ENCODE measurements at regions of chr1 and their contacts with region 1.

Region 1: DNA sequence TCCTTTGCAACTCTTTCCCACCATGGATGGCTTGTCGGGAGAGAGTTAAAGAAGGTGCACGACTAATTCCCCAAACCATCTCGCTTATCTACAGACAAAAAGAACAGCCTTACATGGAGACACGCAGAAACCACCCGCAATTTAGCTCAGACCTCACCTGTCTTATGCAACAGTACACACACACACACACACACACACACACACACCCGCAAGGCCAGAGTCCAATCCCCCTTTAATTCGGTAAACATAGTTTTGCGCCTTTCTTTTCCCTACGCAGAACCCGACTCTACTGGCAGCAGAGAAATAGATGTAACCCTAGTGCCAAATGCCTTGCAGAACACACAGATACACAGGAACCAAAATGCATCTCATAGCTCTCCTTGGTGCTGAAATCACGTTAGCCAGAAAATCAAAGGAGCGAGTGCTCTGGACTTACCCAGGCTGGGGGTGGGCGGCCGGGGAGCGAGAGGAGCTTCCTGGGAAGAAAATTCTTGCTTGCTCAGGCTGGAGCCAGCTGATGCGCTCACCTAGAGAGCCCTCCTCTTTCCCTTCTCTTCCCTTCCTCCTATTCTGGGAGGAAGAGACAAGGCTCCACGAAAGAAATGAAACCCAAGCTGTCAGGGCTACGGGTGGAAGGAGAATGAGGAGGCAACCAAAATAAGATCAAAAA is 470 bp downstream of the TNR start:
- DNase-seq: peak; percentile 43
- H3K4me3 ChIP-seq: peak overlapping the region in 1 of 2 experiments; percentile 43; a peak in 2 of 4 replicates
- H3K27ac ChIP-seq: peak overlapping the region in 1 of 2 experiments; percentile 51; a peak in 1 of 4 replicates
- H3K4me1 ChIP-seq: peaks cover 0 to 5% of the 10 kb centered on the region in 2 experiments; a peak in 1 of 4 replicates
- H3K27me3 ChIP-seq: no peaks in the 10 kb centered on the region
- CTCF ChIP-seq: no peak
- EP300 ChIP-seq: no peak
- RAD21 ChIP-seq: no peak; the same call in 1 of the 2 replicates

Region 2: DNA sequence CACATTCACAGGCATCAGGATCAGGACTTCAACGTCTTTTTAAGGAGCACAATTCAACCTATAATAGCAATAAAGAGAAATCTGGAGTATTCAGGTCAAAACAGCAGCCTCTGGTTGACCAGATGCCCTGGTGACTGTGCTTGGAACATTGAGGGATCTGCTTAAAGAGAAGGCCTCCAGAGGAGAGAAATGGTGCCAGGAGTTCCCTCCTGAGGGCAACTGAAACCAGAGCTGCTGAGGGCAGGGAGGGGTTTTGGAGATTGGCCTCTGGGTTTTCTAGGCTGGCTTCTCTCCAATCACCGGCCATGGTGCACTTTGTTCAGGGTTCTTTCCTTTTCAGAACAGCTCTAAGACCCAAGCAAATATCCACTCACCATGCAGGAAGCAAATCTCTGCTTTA is 359.7 kb before region 1 on chr1:
- CTCF ChIA-PET with region 1: interaction called, 14 read pairs
- POLR2A ChIA-PET with region 1: no interaction called
- DNase-seq: no peak
- H3K4me3 ChIP-seq: no peak overlapping the region
- H3K27ac ChIP-seq: no peak overlapping the region; a peak in 1 of 4 replicates
- H3K4me1 ChIP-seq: peaks cover 0 to 6% of the 10 kb centered on the region in 2 experiments; a peak in 1 of 4 replicates
- H3K27me3 ChIP-seq: no peaks in the 10 kb centered on the region
- CTCF ChIP-seq: no peak
- EP300 ChIP-seq: no peak
- RAD21 ChIP-seq: no peak

Region 3: DNA sequence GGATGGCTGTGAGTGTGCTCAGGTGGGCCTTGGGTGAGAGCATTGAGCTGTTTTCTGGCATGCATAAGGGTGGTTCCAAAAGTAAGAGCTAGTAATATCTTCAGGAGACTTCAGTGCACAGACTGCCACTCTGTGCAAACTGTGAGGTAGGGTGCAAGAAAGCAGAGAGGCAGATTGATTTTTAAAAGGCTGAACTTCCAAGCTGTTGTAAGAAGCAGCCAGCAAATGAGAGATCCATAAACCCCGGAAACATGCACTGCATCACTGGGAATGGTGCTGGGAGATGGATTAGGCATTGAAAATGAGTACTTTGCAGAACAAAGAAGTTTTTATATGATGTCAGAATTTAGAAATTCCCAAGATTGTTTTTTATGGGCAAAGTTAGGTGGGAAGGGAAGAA is 255.0 kb before region 1 on chr1:
- CTCF ChIA-PET with region 1: interaction called, 10 read pairs
- POLR2A ChIA-PET with region 1: no interaction called
- DNase-seq: no peak
- H3K4me3 ChIP-seq: no peak overlapping the region; a peak in 1 of 4 replicates
- H3K27ac ChIP-seq: no peak overlapping the region
- H3K4me1 ChIP-seq: peaks cover 0 to 4% of the 10 kb centered on the region in 2 experiments; a peak in 2 of 4 replicates
- H3K27me3 ChIP-seq: no peaks in the 10 kb centered on the region
- CTCF ChIP-seq: no peak
- EP300 ChIP-seq: no peak
- RAD21 ChIP-seq: no peak

Region 4: GRCh38 chr1:175649416-175649815 is 93.5 kb before region 1 on chr1:
- CTCF ChIA-PET with region 1: interaction called, 10 read pairs
- POLR2A ChIA-PET with region 1: no interaction called
- DNase-seq: no peak
- H3K4me3 ChIP-seq: no peak overlapping the region
- H3K27ac ChIP-seq: no peak overlapping the region
- H3K4me1 ChIP-seq: peaks cover 0 to 6% of the 10 kb centered on the region in 2 experiments; a peak in 2 of 4 replicates
- H3K27me3 ChIP-seq: no peaks in the 10 kb centered on the region
- CTCF ChIP-seq: no peak
- EP300 ChIP-seq: no peak
- RAD21 ChIP-seq: no peak

Region 5: DNA sequence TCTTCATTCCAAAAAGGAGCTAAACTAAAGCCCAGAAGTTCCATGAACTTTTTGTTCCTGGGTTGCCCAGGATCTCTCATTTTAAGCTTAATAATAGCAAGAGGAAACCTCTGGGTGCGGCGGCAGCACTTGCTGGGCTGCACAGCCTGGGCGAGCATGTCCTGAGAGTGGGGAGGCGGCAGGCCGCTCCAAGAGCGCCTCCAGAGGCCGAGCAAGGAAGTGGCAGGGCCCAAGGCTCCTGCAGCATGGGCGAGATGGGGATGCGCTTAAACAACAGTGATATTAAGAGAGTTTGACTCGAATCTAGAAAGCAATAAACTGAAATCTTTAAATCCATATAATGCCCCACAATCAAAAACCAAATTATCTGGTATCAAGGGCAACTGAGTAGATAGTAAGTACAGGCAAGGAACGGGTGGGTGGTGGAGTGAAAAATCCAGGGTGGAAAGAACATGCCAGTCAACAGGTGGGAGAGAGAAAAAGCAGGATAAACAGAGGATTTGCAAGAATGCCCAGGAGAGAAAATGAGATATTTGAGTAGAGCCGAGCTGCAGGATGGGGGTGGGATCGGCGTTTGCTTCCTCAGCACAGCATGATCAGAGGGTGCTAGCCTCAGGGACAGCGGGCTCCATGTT is 14.6 kb after region 1 on chr1:
- CTCF ChIA-PET with region 1: interaction called, 74 read pairs
- POLR2A ChIA-PET with region 1: no interaction called
- DNase-seq: no peak
- H3K4me3 ChIP-seq: no peak overlapping the region; a peak in 1 of 4 replicates
- H3K27ac ChIP-seq: no peak overlapping the region
- H3K4me1 ChIP-seq: no peaks in the 10 kb centered on the region; a peak in 1 of 4 replicates
- H3K27me3 ChIP-seq: no peaks in the 10 kb centered on the region
- CTCF ChIP-seq: peak; percentile 26
- EP300 ChIP-seq: no peak
- RAD21 ChIP-seq: peak; percentile 14; the same call in 1 of the 2 replicates

Region 6: DNA sequence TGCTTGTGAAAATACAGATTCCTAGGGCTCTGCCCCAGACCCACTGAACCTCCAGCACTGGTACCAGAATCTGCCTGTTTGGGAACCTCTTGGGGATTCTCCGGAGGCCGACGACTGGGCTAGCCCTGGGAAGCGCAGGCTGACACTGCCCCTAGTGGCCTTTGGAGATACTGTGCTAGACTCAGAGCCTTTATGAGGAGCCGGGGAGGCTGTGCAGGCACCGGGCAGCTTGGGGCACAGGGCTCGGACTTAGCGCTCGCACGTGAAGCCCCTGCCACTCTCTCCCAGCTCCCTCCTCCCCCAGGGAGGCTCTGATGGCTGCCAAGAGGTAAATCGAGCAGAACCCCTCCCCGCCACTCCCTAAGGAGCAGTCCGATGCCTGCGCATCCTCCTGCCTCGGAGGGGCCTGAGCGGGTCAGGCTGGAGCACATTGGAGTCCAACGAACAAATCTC is 145.1 kb after region 1 on chr1:
- CTCF ChIA-PET with region 1: interaction called, 20 read pairs
- POLR2A ChIA-PET with region 1: no interaction called
- DNase-seq: peak; percentile 85
- H3K4me3 ChIP-seq: peak overlapping the region in 1 of 2 experiments; percentile 35; a peak in 1 of 4 replicates
- H3K27ac ChIP-seq: no peak overlapping the region
- H3K4me1 ChIP-seq: peaks cover 0 to 8% of the 10 kb centered on the region in 2 experiments; a peak in 1 of 4 replicates
- H3K27me3 ChIP-seq: no peaks in the 10 kb centered on the region
- CTCF ChIP-seq: peak; percentile 65
- EP300 ChIP-seq: no peak
- RAD21 ChIP-seq: peak; percentile 86

Region 7: GRCh38 chr1:176017722-176018121 is 274.8 kb after region 1 on chr1:
- CTCF ChIA-PET with region 1: no interaction called
- POLR2A ChIA-PET with region 1: no interaction called
- DNase-seq: no peak
- H3K4me3 ChIP-seq: no peak overlapping the region
- H3K27ac ChIP-seq: no peak overlapping the region
- H3K4me1 ChIP-seq: no peaks in the 10 kb centered on the region; a peak in 2 of 4 replicates
- H3K27me3 ChIP-seq: no peaks in the 10 kb centered on the region
- CTCF ChIP-seq: no peak
- EP300 ChIP-seq: no peak
- RAD21 ChIP-seq: no peak

Measured in SK-N-SH (cell line).